A549 (cell line): ENCODE measurements at regions of chr20 and their contacts with region 1.

Region 1: GRCh38 chr20:59948828-59949720 is 8.9 kb downstream of the FAM217B start:
- DNase-seq: peak in 1 of 2 experiments; percentile 57
- ATAC-seq: peak; percentile 66 to 69; a peak in 4 of 6 replicates
- H3K4me3 ChIP-seq: no peak overlapping the region
- H3K27ac ChIP-seq: no peak overlapping the region
- H3K4me1 ChIP-seq: 0 out of 3 replicates have a peak, but pooled peaks cover 3% of the 10 kb centered on the region
- CTCF ChIP-seq: peak; percentile 72
- EP300 ChIP-seq: no peak
- POLR2A ChIP-seq: no peak
- RAD21 ChIP-seq: peak; percentile 63 to 67

Region 2: DNA sequence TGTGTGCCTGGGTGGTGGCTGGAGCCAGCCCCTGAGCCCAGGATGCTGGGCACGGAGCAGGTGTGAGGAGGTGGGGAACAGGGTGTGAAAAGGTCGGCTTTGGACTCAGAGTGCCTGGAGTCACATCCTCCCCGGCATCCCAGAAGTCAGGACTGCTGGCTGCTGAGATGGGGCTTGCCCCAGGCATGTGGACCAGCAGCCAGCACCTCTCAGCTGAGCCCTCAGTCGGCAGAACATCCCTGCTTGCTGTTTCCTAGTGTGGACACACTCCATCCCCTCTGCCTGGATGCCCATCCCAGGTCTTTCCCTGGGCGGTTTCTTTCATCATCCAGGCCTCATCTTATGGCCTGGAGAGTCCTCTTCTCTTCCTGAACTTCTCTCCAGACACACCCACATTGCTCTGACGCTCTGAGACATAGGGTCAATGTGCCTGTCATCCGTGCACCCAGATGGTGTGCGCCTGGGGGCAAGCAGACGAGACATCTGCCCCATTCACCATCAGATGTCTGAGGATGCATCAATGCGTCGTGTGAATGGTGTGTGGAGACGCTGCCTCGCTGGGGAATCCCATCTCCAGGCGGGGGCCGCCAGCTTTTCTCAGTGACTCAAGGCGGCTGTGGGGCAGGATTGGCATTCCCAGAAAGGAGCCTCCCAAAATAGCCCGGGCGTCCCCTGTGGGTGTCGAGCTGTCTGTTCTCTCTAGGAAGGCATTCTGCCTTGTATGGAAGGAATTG is 119.9 kb before region 1 on chr20:
- CTCF ChIA-PET with region 1: no interaction called
- POLR2A ChIA-PET with region 1: no interaction called
- DNase-seq: no peak
- ATAC-seq: no peak; a peak in 1 of 6 replicates
- H3K4me3 ChIP-seq: no peak overlapping the region
- H3K27ac ChIP-seq: no peak overlapping the region
- H3K4me1 ChIP-seq: no peaks in the 10 kb centered on the region
- CTCF ChIP-seq: no peak
- EP300 ChIP-seq: no peak
- POLR2A ChIP-seq: no peak
- RAD21 ChIP-seq: no peak

Region 3: GRCh38 chr20:59845472-59845871 is 103.6 kb before region 1 on chr20:
- CTCF ChIA-PET with region 1: no interaction called
- POLR2A ChIA-PET with region 1: no interaction called
- DNase-seq: no peak
- ATAC-seq: no peak
- H3K4me3 ChIP-seq: no peak overlapping the region
- H3K27ac ChIP-seq: no peak overlapping the region
- H3K4me1 ChIP-seq: no peaks in the 10 kb centered on the region
- CTCF ChIP-seq: no peak
- EP300 ChIP-seq: no peak
- POLR2A ChIP-seq: no peak
- RAD21 ChIP-seq: no peak

Region 4: GRCh38 chr20:59933849-59934596 is 15.1 kb before region 1 on chr20:
- CTCF ChIA-PET with region 1: interaction called, 73 read pairs
- POLR2A ChIA-PET with region 1: no interaction called
- DNase-seq: peak; percentile 79 to 82
- ATAC-seq: peak; percentile 98 to 99
- H3K4me3 ChIP-seq: peak overlapping the region; percentile 66
- H3K27ac ChIP-seq: peak overlapping the region; percentile 72 to 87
- H3K4me1 ChIP-seq: peaks cover 16% of the 10 kb centered on the region; the same call in 2 of the 3 replicates
- CTCF ChIP-seq: peak; percentile 90
- EP300 ChIP-seq: no peak
- POLR2A ChIP-seq: no peak
- RAD21 ChIP-seq: peak; percentile 15 to 26; a peak in 2 of 5 replicates